Naive thymus-derived CD4-positive, alpha-beta T cell (primary cell): ENCODE measurements at regions of chr11 and their contacts with region 1.

Region 1: GRCh38 chr11:108008656-108009496 is at the start of gene CUL5:
- DNase-seq: peak; percentile 84 to 94 (median 90)
- ATAC-seq: peak; percentile 94
- H3K4me3 ChIP-seq: peak within 1 kb of the TSS; percentile 94
- H3K4me3 Mint-ChIP-seq: peak within 1 kb of the TSS in 9 of 10 donors; percentile 89 to 100 (median 99)
- H3K27ac ChIP-seq: peak within 1 kb of the TSS; percentile 94
- H3K27ac Mint-ChIP-seq: peak within 1 kb of the TSS; percentile 94 to 99 (median 96)
- H3K4me1 ChIP-seq: peaks cover 15 to 25% of the 10 kb centered on the region in 2 donors
- H3K4me1 Mint-ChIP-seq: peaks cover 7 to 18% (median 12%) of the 10 kb centered on the region in 7 donors
- H3K27me3 ChIP-seq: no peaks in the 10 kb centered on the region
- H3K27me3 Mint-ChIP-seq: no peaks in the 10 kb centered on the region
- total RNA-seq, gene CUL5: 32.3 to 59.7 (median 39.2) TPM

Region 2: DNA sequence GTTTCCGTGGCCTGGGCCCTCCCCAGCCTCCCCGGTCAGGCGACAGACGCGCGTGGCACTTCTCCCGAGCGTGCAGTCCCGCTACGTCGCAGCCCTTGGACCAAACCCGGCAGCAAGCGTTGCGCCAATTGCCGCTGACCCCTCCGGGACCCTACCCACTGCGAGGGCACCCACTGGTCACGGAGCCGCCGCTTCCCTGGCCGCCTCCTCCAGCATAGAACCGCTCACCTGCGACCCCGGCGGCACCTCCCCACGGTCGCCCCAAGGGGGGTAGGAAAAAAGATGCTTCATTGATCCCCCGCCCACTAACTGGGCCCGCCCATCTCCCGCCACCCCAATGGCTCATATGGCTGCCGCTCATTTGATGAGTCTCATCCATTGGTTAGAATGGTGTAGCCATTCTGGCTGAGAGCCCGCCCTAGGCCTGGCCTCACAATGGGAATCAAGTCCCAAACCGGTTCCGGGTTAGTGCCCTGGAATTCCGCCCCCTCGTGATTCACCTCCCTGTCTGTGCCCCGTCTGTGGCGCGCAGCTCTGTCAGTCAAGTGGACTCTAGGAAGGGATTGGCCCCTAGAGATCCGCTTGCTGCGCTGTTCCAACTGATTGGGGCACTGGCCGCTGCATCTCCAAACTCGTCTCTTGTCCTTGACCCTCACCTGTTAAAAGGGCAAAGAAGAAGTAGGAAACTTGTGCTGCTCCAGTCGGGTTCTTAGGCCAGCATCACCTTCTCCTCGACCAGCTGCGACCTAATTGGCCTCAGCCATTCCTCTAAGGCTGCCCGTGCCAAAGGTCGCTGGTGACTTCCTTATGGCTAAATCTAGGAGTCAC is 1986.7 kb before region 1 on chr11 and contains the start of gene MSANTD4:
- CTCF ChIA-PET with region 1: no interaction called
- POLR2A ChIA-PET with region 1: no interaction called
- intact Hi-C with region 1: loop called in 1 of 2 experiments (anchors 2 kb)
- DNase-seq: peak; percentile 89 to 97 (median 95)
- ATAC-seq: peak; percentile 98
- H3K4me3 ChIP-seq: peak within 1 kb of the TSS; percentile 82
- H3K4me3 Mint-ChIP-seq: peak within 1 kb of the TSS; percentile 91 to 99 (median 94)
- H3K27ac ChIP-seq: peak within 1 kb of the TSS; percentile 66
- H3K27ac Mint-ChIP-seq: peak within 1 kb of the TSS; percentile 82 to 96 (median 89)
- H3K4me1 ChIP-seq: peaks cover 10 to 20% of the 10 kb centered on the region in 2 donors
- H3K4me1 Mint-ChIP-seq: peaks cover 34 to 60% (median 49%) of the 10 kb centered on the region in 7 donors
- H3K27me3 ChIP-seq: no peaks in the 10 kb centered on the region
- H3K27me3 Mint-ChIP-seq: peaks cover 0 to 13% (median 6%) of the 10 kb centered on the region in 5 donors
- total RNA-seq, gene MSANTD4: 4.7 to 18.7 (median 15.3) TPM

Region 3: GRCh38 chr11:107457558-107458271 is 551.2 kb before region 1 on chr11 and contains the start of gene CWF19L2:
- CTCF ChIA-PET with region 1: no interaction called
- POLR2A ChIA-PET with region 1: interaction called, 5 read pairs
- intact Hi-C with region 1: loop called (anchors 1 to 5 kb)
- DNase-seq: peak; percentile 62 to 94 (median 92)
- ATAC-seq: peak; percentile 99
- H3K4me3 ChIP-seq: peak within 1 kb of the TSS; percentile 91
- H3K4me3 Mint-ChIP-seq: peak within 1 kb of the TSS; percentile 84 to 100 (median 93)
- H3K27ac ChIP-seq: peak within 1 kb of the TSS; percentile 82
- H3K27ac Mint-ChIP-seq: peak within 1 kb of the TSS; percentile 87 to 98 (median 96)
- H3K4me1 ChIP-seq: peaks cover 7 to 13% of the 10 kb centered on the region in 2 donors
- H3K4me1 Mint-ChIP-seq: peaks cover 19 to 50% (median 32%) of the 10 kb centered on the region in 7 donors
- H3K27me3 ChIP-seq: no peaks in the 10 kb centered on the region
- H3K27me3 Mint-ChIP-seq: peaks cover 0 to 10% (median 0%) of the 10 kb centered on the region in 5 donors
- total RNA-seq, gene CWF19L2: 17.0 to 38.9 (median 27.2) TPM

Region 4: DNA sequence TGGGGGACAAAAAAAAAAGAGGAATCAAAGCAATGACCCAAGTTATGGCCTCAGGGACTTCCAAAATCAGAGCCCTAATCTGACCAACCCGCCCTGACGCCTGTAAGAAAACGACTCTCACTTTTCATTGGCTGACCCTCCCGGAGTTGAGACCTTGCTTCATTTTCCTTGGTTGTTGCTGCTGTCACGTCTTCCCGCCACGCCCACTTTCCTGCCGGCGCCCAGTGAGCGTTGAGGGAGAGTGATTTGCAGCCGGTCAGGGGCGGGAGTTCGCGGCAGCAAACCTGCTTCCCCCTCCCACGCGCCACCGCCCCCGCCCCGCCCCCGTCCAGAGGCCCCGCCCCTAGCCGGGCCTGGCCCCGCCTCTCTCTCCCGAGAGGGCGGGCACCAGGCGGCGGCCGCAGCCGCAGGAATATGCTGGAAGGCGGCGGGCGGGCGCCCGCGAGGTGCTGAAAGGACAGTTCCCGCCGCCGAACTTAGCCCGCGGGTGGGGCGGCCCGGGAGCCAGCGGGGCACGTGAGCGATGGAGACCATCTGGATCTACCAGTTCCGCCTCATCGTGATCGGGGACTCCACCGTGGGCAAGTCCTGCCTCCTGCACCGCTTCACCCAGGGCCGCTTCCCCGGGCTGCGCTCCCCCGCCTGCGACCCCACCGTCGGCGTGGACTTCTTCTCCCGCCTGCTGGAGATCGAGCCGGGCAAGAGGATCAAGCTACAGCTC is 80.7 kb before region 1 on chr11 and contains the start of gene RAB39A:
- CTCF ChIA-PET with region 1: no interaction called
- POLR2A ChIA-PET with region 1: no interaction called
- intact Hi-C with region 1: loop called in 1 of 2 experiments (anchors 1 kb)
- DNase-seq: peak in 8 of 9 donors; percentile 25 to 73 (median 35)
- ATAC-seq: peak; percentile 92
- H3K4me3 ChIP-seq: no peak within 1 kb of the TSS
- H3K4me3 Mint-ChIP-seq: peak within 1 kb of the TSS; percentile 22 to 84 (median 67)
- H3K27ac ChIP-seq: no peak within 1 kb of the TSS
- H3K27ac Mint-ChIP-seq: peak within 1 kb of the TSS in 1 of 9 donors; percentile 33
- H3K4me1 ChIP-seq: peaks cover 6 to 7% of the 10 kb centered on the region in 2 donors
- H3K4me1 Mint-ChIP-seq: peaks cover 5 to 15% (median 11%) of the 10 kb centered on the region in 7 donors
- H3K27me3 ChIP-seq: peaks cover 0 to 15% of the 10 kb centered on the region in 2 donors
- H3K27me3 Mint-ChIP-seq: peaks cover 36 to 62% (median 52%) of the 10 kb centered on the region in 5 donors
- total RNA-seq, gene RAB39A: 0.38 to 1.6 TPM in 2 of 5 experiments, not detected in the others

Region 5: GRCh38 chr11:108121274-108122155 is 112.6 kb after region 1 on chr11 and contains the start of gene ACAT1:
- CTCF ChIA-PET with region 1: no interaction called
- POLR2A ChIA-PET with region 1: no interaction called
- intact Hi-C with region 1: loop called (anchors 1 to 2 kb)
- DNase-seq: peak; percentile 91 to 98 (median 94)
- ATAC-seq: peak; percentile 100
- H3K4me3 ChIP-seq: peak within 1 kb of the TSS; percentile 88
- H3K4me3 Mint-ChIP-seq: peak within 1 kb of the TSS; percentile 81 to 97 (median 94)
- H3K27ac ChIP-seq: peak within 1 kb of the TSS; percentile 66
- H3K27ac Mint-ChIP-seq: peak within 1 kb of the TSS; percentile 61 to 93 (median 85)
- H3K4me1 ChIP-seq: peaks cover 16 to 20% of the 10 kb centered on the region in 2 donors
- H3K4me1 Mint-ChIP-seq: peaks cover 35 to 49% (median 41%) of the 10 kb centered on the region in 7 donors
- H3K27me3 ChIP-seq: no peaks in the 10 kb centered on the region
- H3K27me3 Mint-ChIP-seq: no peaks in the 10 kb centered on the region
- total RNA-seq, gene ACAT1: 13.0 to 40.2 (median 17.9) TPM

Region 6: GRCh38 chr11:108497317-108498045 is 488.6 kb after region 1 on chr11:
- CTCF ChIA-PET with region 1: no interaction called
- POLR2A ChIA-PET with region 1: no interaction called
- intact Hi-C with region 1: loop called in 1 of 2 experiments (anchors 5 kb)
- DNase-seq: peak in 8 of 9 donors; percentile 68 to 83 (median 76)
- ATAC-seq: peak; percentile 92
- H3K4me3 ChIP-seq: peak overlapping the region; percentile 77
- H3K4me3 Mint-ChIP-seq: peak overlapping the region; percentile 95 to 100 (median 98)
- H3K27ac ChIP-seq: peak overlapping the region; percentile 87
- H3K27ac Mint-ChIP-seq: peak overlapping the region; percentile 95 to 100 (median 99)
- H3K4me1 ChIP-seq: peaks cover 0 to 3% of the 10 kb centered on the region in 2 donors
- H3K4me1 Mint-ChIP-seq: peaks cover 8 to 33% (median 24%) of the 10 kb centered on the region in 7 donors
- H3K27me3 ChIP-seq: no peaks in the 10 kb centered on the region
- H3K27me3 Mint-ChIP-seq: no peaks in the 10 kb centered on the region

Region 7: DNA sequence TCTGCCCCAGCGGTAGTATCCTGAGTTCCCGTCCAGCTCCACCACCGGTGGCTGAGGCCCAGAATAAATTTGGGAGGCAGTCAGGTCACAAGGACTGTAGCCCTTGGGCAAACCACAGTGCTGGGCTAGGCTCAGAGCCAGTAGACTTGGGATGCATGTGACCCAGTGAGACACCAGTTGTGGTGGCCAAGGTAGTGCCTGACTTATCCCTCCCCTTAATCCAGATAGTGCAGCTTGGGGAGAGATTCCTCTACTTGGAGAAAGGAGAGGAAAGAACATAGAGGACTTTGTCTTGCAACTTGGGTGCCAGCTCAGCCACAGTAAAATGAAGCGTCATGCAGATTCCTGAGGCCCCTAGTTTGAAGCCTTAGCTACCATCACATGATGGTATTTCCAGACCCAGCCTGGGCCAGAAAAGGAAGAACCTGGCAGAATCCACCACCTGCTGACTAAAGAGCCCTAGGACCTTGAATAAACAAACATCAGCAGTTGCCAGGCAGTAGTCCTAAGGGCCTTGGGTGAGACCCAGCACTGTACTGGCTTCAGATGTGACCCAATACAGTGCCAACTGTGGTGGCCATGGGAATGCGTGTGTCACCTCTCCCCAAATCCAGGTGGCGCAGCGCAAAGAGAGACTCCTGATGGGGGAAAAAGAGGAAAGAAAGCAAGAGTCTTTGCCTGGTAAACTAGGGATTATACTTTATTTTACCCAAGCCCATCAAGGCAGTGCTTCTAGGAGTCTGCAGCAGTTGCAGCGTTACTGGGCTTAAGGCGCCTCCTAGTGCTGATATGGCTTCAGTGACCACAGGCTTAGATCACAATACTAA is 639.0 kb after region 1 on chr11:
- CTCF ChIA-PET with region 1: interaction called, 5 read pairs
- POLR2A ChIA-PET with region 1: no interaction called
- intact Hi-C with region 1: loop called (anchors 1 kb)
- DNase-seq: peak; percentile 17 to 70 (median 62)
- ATAC-seq: peak; percentile 91
- H3K4me3 ChIP-seq: no peak overlapping the region
- H3K4me3 Mint-ChIP-seq: no peak overlapping the region
- H3K27ac ChIP-seq: no peak overlapping the region
- H3K27ac Mint-ChIP-seq: no peak overlapping the region
- H3K4me1 ChIP-seq: no peaks in the 10 kb centered on the region
- H3K4me1 Mint-ChIP-seq: no peaks in the 10 kb centered on the region
- H3K27me3 ChIP-seq: no peaks in the 10 kb centered on the region
- H3K27me3 Mint-ChIP-seq: peaks cover 0 to 9% (median 0%) of the 10 kb centered on the region in 5 donors